ENCODE measurements at regions of chr22 and their contacts with region 1.

Region 1: DNA sequence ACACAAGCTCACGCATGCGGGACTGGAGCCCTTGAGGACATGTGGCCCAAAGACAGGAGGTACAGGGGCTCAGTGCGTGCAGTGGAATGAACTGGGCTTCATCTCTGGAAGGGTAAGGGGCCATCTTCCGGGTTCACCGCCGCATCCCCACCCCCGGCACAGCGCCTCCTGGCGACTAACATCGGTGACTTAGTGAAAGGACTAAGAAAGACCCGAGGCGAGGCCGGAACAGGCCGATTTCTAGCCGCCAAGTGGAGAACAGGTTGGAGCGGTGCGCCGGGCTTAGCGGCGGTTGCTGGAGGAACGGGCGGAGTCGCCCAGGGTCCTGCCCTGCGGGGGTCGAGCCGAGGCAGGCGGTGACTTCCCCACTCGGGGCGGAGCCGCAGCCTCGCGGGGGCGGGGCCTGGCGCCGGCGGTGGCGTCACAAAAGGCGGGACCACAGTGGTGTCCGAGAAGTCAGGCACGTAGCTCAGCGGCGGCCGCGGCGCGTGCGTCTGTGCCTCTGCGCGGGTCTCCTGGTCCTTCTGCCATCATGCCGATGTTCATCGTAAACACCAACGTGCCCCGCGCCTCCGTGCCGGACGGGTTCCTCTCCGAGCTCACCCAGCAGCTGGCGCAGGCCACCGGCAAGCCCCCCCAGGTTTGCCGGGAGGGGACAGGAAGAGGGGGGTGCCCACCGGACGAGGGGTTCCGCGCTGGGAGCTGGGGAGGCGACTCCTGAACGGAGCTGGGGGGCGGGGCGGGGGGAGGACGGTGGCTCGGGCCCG is at the start of gene MIF:
- H3K4me3 ChIP-seq: peak within 1 kb of the TSS; percentile 82
- H3K27ac ChIP-seq: peak within 1 kb of the TSS; percentile 94
- H3K4me1 ChIP-seq: peaks cover 15% of the 10 kb centered on the region
- CTCF ChIP-seq: peak; percentile 98

Region 2: GRCh38 chr22:23315341-23315917 is 578.7 kb before region 1 on chr22:
- CTCF ChIA-PET with region 1: no interaction called
- POLR2A ChIA-PET with region 1: no interaction called
- H3K4me3 ChIP-seq: no peak overlapping the region
- H3K27ac ChIP-seq: no peak overlapping the region
- H3K4me1 ChIP-seq: no peaks in the 10 kb centered on the region
- CTCF ChIP-seq: peak; percentile 62

Region 3: GRCh38 chr22:23849009-23850006 is 44.8 kb before region 1 on chr22:
- CTCF ChIA-PET with region 1: interaction called, 10 read pairs
- POLR2A ChIA-PET with region 1: no interaction called
- H3K4me3 ChIP-seq: no peak overlapping the region
- H3K27ac ChIP-seq: no peak overlapping the region
- H3K4me1 ChIP-seq: no peaks in the 10 kb centered on the region
- CTCF ChIP-seq: peak; percentile 97

Region 4: GRCh38 chr22:23857606-23858483 is 36.3 kb before region 1 on chr22 and contains the start of gene SLC2A11:
- CTCF ChIA-PET with region 1: interaction called, 9 read pairs
- POLR2A ChIA-PET with region 1: interaction called, 61 read pairs
- H3K4me3 ChIP-seq: peak within 1 kb of the TSS; percentile 64
- H3K27ac ChIP-seq: peak within 1 kb of the TSS; percentile 87
- H3K4me1 ChIP-seq: peaks cover 7% of the 10 kb centered on the region; the same call in 1 of the 2 replicates
- CTCF ChIP-seq: peak; percentile 45; the same call in 1 of the 2 replicates

Region 5: GRCh38 chr22:23868580-23868979 is 25.5 kb before region 1 on chr22:
- CTCF ChIA-PET with region 1: interaction called, 11 read pairs
- POLR2A ChIA-PET with region 1: interaction called, 13 read pairs
- H3K4me3 ChIP-seq: no peak overlapping the region
- H3K27ac ChIP-seq: no peak overlapping the region
- H3K4me1 ChIP-seq: no peaks in the 10 kb centered on the region
- CTCF ChIP-seq: no peak

Region 6: GRCh38 chr22:23874871-23875270 is 19.3 kb before region 1 on chr22:
- CTCF ChIA-PET with region 1: interaction called, 9 read pairs
- POLR2A ChIA-PET with region 1: interaction called, 13 read pairs
- H3K4me3 ChIP-seq: no peak overlapping the region
- H3K27ac ChIP-seq: no peak overlapping the region
- H3K4me1 ChIP-seq: no peaks in the 10 kb centered on the region
- CTCF ChIP-seq: no peak

Region 7: GRCh38 chr22:23904573-23905260 is 10.6 kb after region 1 on chr22:
- CTCF ChIA-PET with region 1: interaction called, 26 read pairs
- POLR2A ChIA-PET with region 1: interaction called, 22 read pairs
- H3K4me3 ChIP-seq: no peak overlapping the region
- H3K27ac ChIP-seq: no peak overlapping the region
- H3K4me1 ChIP-seq: no peaks in the 10 kb centered on the region
- CTCF ChIP-seq: no peak

Region 8: GRCh38 chr22:23913661-23914353 is 19.7 kb after region 1 on chr22:
- CTCF ChIA-PET with region 1: interaction called, 6 read pairs
- POLR2A ChIA-PET with region 1: interaction called, 71 read pairs
- H3K4me3 ChIP-seq: peak overlapping the region; percentile 63
- H3K27ac ChIP-seq: peak overlapping the region; percentile 94
- H3K4me1 ChIP-seq: peaks cover 4% of the 10 kb centered on the region; the same call in 1 of the 2 replicates
- CTCF ChIP-seq: 0 out of 2 replicates have a peak, but pooled peaks have one; percentile 42

Region 9: DNA sequence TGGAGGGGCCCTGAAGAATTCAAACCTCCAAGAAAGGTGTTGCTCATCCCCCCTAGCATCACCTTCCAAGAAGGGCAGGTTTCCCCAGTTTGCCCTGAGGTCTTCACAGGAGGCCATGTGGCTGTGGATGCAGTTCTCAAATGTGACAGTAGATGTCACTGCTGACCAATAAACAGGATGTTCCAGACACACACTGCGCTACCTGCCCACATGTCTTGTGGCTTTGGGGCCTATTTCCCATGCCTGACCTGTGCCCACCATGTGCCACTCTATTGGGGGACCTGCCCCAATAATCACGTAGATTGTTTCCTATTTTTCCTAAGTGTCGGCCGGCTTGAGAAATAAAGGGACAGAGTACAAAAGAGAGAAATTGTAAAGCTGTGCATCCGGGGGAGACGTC is 90.3 kb after region 1 on chr22:
- CTCF ChIA-PET with region 1: no interaction called
- POLR2A ChIA-PET with region 1: no interaction called
- H3K4me3 ChIP-seq: no peak overlapping the region
- H3K27ac ChIP-seq: no peak overlapping the region
- H3K4me1 ChIP-seq: no peaks in the 10 kb centered on the region
- CTCF ChIP-seq: peak; percentile 78

Region 10: DNA sequence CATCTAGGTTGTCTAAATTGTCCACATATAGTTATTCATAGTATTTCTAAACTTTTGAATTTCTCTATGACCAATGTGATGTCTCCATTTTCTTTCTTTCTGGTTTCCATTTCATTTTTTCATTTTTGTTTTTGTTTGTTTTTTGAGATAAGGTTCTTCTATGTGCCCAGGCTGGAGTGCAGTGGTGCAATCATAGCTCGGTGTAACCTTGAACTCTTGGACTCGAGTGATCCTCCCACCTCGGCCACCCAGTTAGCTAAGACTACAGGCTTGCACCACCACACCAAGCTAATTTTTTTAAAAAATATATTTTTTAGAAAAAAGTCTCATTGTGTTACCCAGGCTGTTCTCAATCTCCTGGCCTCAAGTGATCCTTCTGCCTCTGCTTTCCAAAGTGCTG is 103.0 kb after region 1 on chr22:
- CTCF ChIA-PET with region 1: no interaction called
- POLR2A ChIA-PET with region 1: no interaction called
- H3K4me3 ChIP-seq: no peak overlapping the region
- H3K27ac ChIP-seq: no peak overlapping the region
- H3K4me1 ChIP-seq: no peaks in the 10 kb centered on the region
- CTCF ChIP-seq: no peak